MCF 10A (cell line): ENCODE measurements at regions of chr3 and their contacts with region 1.

Region 1: DNA sequence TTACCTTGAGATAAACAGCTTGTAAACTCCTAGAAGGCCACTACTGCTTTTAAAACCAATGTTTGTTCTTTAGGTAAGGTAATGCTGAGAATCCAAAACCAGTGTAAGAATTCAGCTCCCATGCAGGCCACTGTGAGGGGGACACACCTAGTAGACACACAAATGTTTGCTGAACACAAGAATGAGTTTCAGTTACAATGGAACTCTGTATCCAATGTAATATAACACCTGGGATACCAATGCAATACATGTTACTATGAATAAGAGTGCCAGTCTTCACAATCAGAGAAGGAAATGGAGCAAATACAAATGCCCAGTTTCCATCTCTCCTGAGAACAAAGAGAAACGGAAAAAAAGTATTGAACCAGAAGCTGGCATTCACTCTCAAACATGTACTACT is 65.9 kb downstream of the IGF2BP2 start:
- DNase-seq: no peak
- H3K4me3 Mint-ChIP-seq: no peak overlapping the region
- H3K27ac Mint-ChIP-seq: peak overlapping the region; percentile 2
- H3K4me1 Mint-ChIP-seq: peaks cover 57% of the 10 kb centered on the region
- H3K27me3 Mint-ChIP-seq: no peaks in the 10 kb centered on the region
- CTCF ChIP-seq: no peak

Region 2: GRCh38 chr3:185613016-185613415 is 145.9 kb before region 1 on chr3:
- CTCF ChIA-PET with region 1: no interaction called
- POLR2A ChIA-PET with region 1: no interaction called
- intact Hi-C with region 1: no loop called
- DNase-seq: no peak
- H3K4me3 Mint-ChIP-seq: no peak overlapping the region
- H3K27ac Mint-ChIP-seq: no peak overlapping the region
- H3K4me1 Mint-ChIP-seq: no peaks in the 10 kb centered on the region
- H3K27me3 Mint-ChIP-seq: no peaks in the 10 kb centered on the region
- CTCF ChIP-seq: no peak

Region 3: GRCh38 chr3:185770109-185770508 is 11.2 kb after region 1 on chr3:
- CTCF ChIA-PET with region 1: interaction called, 10 read pairs
- POLR2A ChIA-PET with region 1: interaction called, 4 read pairs
- intact Hi-C with region 1: no loop called
- DNase-seq: no peak
- H3K4me3 Mint-ChIP-seq: no peak overlapping the region
- H3K27ac Mint-ChIP-seq: no peak overlapping the region
- H3K4me1 Mint-ChIP-seq: peaks cover 33% of the 10 kb centered on the region
- H3K27me3 Mint-ChIP-seq: no peaks in the 10 kb centered on the region
- CTCF ChIP-seq: no peak

Region 4: GRCh38 chr3:185912929-185913901 is 154.3 kb after region 1 on chr3:
- CTCF ChIA-PET with region 1: no interaction called
- POLR2A ChIA-PET with region 1: no interaction called
- intact Hi-C with region 1: no loop called
- DNase-seq: no peak
- H3K4me3 Mint-ChIP-seq: no peak overlapping the region
- H3K27ac Mint-ChIP-seq: no peak overlapping the region
- H3K4me1 Mint-ChIP-seq: no peaks in the 10 kb centered on the region
- H3K27me3 Mint-ChIP-seq: no peaks in the 10 kb centered on the region
- CTCF ChIP-seq: no peak